ENCODE measurements at regions of chr6 and their contacts with region 1.

Region 1: GRCh38 chr6:19851241-19852089 is 14.3 kb downstream of the ID4 start:
- DNase-seq: peak; percentile 43 to 68
- H3K4me3 ChIP-seq: no peak overlapping the region
- H3K27ac ChIP-seq: no peak overlapping the region
- H3K4me1 ChIP-seq: 0 out of 2 replicates have a peak, but pooled peaks cover 4% of the 10 kb centered on the region
- H3K27me3 ChIP-seq: no peaks in the 10 kb centered on the region
- CTCF ChIP-seq: peak; percentile 88

Region 2: GRCh38 chr6:18990059-18990978 is 861.1 kb before region 1 on chr6:
- CTCF ChIA-PET with region 1: no interaction called
- POLR2A ChIA-PET with region 1: no interaction called
- intact Hi-C with region 1: loop called (anchors 10 kb)
- DNase-seq: no peak
- H3K4me3 ChIP-seq: no peak overlapping the region
- H3K27ac ChIP-seq: no peak overlapping the region
- H3K4me1 ChIP-seq: no peaks in the 10 kb centered on the region
- H3K27me3 ChIP-seq: no peaks in the 10 kb centered on the region
- CTCF ChIP-seq: no peak

Region 3: GRCh38 chr6:19204443-19204842 is 647.0 kb before region 1 on chr6:
- CTCF ChIA-PET with region 1: no interaction called
- POLR2A ChIA-PET with region 1: no interaction called
- intact Hi-C with region 1: loop called (anchors 1 kb)
- DNase-seq: no peak
- H3K4me3 ChIP-seq: no peak overlapping the region
- H3K27ac ChIP-seq: no peak overlapping the region
- H3K4me1 ChIP-seq: peaks cover 6% of the 10 kb centered on the region; the same call in 1 of the 2 replicates
- H3K27me3 ChIP-seq: no peaks in the 10 kb centered on the region
- CTCF ChIP-seq: peak; percentile 42; the same call in 1 of the 2 replicates

Region 4: GRCh38 chr6:19415585-19416326 is 435.7 kb before region 1 on chr6:
- CTCF ChIA-PET with region 1: no interaction called
- POLR2A ChIA-PET with region 1: no interaction called
- intact Hi-C with region 1: loop called (anchors 5 kb)
- DNase-seq: peak; percentile 60 to 94
- H3K4me3 ChIP-seq: peak overlapping the region; percentile 16; the same call in 1 of the 2 replicates
- H3K27ac ChIP-seq: peak overlapping the region; percentile 91
- H3K4me1 ChIP-seq: peaks cover 57% of the 10 kb centered on the region
- H3K27me3 ChIP-seq: no peaks in the 10 kb centered on the region
- CTCF ChIP-seq: no peak

Region 5: GRCh38 chr6:19538077-19538512 is 313.4 kb before region 1 on chr6:
- CTCF ChIA-PET with region 1: no interaction called
- POLR2A ChIA-PET with region 1: no interaction called
- intact Hi-C with region 1: loop called (anchors 5 kb)
- DNase-seq: peak; percentile 96 to 99
- H3K4me3 ChIP-seq: no peak overlapping the region
- H3K27ac ChIP-seq: no peak overlapping the region
- H3K4me1 ChIP-seq: peaks cover 24% of the 10 kb centered on the region
- H3K27me3 ChIP-seq: no peaks in the 10 kb centered on the region
- CTCF ChIP-seq: no peak

Region 6: DNA sequence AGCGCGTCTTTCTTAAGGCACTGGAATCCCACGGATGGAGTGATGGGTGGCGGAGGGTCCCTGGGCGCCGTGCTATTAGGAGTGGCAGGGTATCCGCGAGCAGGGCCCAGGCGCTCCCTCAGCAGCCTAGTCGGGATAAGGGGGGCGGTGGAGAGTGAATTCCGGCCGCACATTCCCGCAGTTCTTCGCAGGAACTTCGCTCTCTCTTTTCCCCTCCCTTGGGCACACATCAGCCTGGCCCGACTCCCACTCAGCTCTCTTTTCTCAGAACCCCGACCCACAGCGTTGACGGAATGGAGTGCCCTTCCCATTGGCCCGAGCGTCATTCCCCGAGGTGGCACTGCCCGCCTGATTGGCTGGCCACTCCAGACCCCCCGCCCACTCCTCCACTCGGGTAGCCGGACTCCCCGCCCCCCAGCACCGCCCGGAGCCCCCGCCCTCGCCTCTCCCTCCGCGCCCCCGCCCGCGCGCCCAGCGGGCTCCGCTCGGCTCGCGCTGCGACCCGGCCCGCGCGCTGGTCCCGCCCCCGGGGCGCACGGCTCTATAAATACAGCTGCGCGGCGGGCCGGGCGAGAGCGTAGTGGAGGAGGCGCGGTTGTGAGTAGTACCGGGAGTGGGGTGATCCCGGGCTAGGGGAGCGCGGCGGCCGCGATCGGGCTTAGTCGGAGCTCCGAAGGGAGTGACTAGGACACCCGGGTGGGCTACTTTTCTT is 14.5 kb before region 1 on chr6 and contains the start of gene ID4:
- CTCF ChIA-PET with region 1: no interaction called
- POLR2A ChIA-PET with region 1: interaction called, 10 read pairs
- intact Hi-C with region 1: no loop called
- DNase-seq: peak in 1 of 2 experiments; percentile 83
- H3K4me3 ChIP-seq: peak within 1 kb of the TSS; percentile 66
- H3K27ac ChIP-seq: no peak within 1 kb of the TSS
- H3K4me1 ChIP-seq: peaks cover 13% of the 10 kb centered on the region
- H3K27me3 ChIP-seq: peaks cover 17% of the 10 kb centered on the region
- CTCF ChIP-seq: no peak
- total RNA-seq, gene ID4: 4.4 and 5.9 TPM in 2 replicates

Measured in PC-9 (cell line).